ENCODE measurements at regions of chr3 and their contacts with region 1.

Region 1: DNA sequence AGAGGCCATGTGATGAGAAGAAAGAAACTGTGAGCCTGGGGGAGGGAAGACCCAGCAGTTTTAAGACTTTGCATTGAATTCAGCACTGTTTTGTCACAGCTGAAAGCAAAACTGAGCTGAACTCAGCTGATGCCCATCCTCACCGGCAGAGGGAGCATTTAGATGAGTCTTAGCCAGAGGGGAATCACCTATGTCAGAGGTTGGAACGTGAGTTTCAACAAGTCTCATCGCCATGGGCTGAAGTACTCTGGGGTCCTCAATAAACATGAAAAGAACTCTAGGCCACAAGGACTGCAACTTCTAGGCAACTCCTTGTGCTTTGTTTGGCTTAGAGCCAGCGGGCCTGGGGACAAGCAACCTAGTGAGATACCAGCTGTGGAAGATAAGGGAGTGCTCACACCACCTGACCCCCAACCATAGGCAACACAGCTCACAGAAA is 324.5 kb downstream of the TBL1XR1 start:
- DNase-seq: peak; percentile 69
- ATAC-seq: peak; percentile 94
- H3K4me3 Mint-ChIP-seq: no peak overlapping the region
- H3K27ac Mint-ChIP-seq: no peak overlapping the region
- H3K4me1 Mint-ChIP-seq: peaks cover 3% of the 10 kb centered on the region
- H3K27me3 Mint-ChIP-seq: no peaks in the 10 kb centered on the region

Region 2: GRCh38 chr3:176807938-176808337 is 64.9 kb before region 1 on chr3:
- CTCF ChIA-PET with region 1: no interaction called
- POLR2A ChIA-PET with region 1: no interaction called
- DNase-seq: no peak
- ATAC-seq: no peak
- H3K4me3 Mint-ChIP-seq: no peak overlapping the region
- H3K27ac Mint-ChIP-seq: no peak overlapping the region
- H3K4me1 Mint-ChIP-seq: no peaks in the 10 kb centered on the region
- H3K27me3 Mint-ChIP-seq: no peaks in the 10 kb centered on the region

Region 3: GRCh38 chr3:176939022-176939817 is 66.4 kb after region 1 on chr3:
- CTCF ChIA-PET with region 1: interaction called, 43 read pairs
- POLR2A ChIA-PET with region 1: no interaction called
- DNase-seq: peak; percentile 57
- ATAC-seq: peak; percentile 75
- H3K4me3 Mint-ChIP-seq: no peak overlapping the region
- H3K27ac Mint-ChIP-seq: no peak overlapping the region
- H3K4me1 Mint-ChIP-seq: peaks cover 7% of the 10 kb centered on the region
- H3K27me3 Mint-ChIP-seq: peaks cover 8% of the 10 kb centered on the region

Region 4: GRCh38 chr3:178385280-178385952 is 1512.6 kb after region 1 on chr3:
- CTCF ChIA-PET with region 1: interaction called, 12 read pairs
- POLR2A ChIA-PET with region 1: no interaction called
- DNase-seq: peak; percentile 26
- ATAC-seq: no peak
- H3K4me3 Mint-ChIP-seq: no peak overlapping the region
- H3K27ac Mint-ChIP-seq: no peak overlapping the region
- H3K4me1 Mint-ChIP-seq: no peaks in the 10 kb centered on the region
- H3K27me3 Mint-ChIP-seq: peaks cover 5% of the 10 kb centered on the region

Measured in activated CD8-positive, alpha-beta T cell treated with anti-CD3 and anti-CD28 coated beads, Interleukin-2, amount 10 ng/mL, durations not matched to agents 7 days and 5 days (primary cell).